GM12878 (cell line): ENCODE measurements at regions of chr20 and their contacts with region 1.

Region 1: DNA sequence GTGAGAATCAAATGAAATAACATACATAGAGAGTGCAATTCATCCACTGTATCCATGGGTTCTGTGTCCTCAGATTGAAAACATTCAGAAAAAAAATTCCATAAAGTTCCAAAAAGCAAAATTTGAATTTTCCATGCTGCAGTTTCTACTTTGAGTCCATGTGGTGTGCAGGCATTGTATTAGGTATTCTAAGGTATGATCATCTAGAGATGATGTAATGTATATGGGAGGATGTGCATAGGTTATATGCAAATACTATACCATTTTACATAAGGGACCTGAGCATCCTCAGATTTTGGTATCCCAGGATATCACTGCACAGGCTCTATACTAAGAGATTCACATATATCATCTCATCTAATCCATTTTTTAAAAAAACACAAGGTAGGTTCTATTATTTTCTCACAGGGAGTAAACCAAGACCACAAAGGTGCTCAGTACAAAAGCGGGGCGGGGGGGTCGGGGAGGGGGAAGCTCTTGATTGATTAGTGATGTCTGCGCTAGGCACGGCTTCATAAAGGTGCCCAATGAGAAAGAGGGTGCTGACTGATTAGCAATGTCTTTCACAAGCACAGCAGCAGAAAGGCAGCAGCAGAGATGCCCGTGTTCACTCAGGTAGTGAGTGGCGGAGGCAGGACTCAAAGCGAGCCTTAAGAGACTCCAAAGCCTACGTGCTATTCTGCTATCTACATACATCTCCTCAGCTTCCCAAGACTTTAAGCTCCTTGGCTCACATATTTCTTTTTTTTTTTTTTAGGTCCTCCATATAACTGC is 20.5 kb downstream of the NFATC2 start:
- DNase-seq: no peak
- ATAC-seq: no peak
- H3K4me3 ChIP-seq: no peak overlapping the region
- H3K27ac ChIP-seq: no peak overlapping the region
- H3K4me1 ChIP-seq: peaks cover 26% of the 10 kb centered on the region
- H3K27me3 ChIP-seq: no peaks in the 10 kb centered on the region
- CTCF ChIP-seq: no peak
- EP300 ChIP-seq: no peak
- POLR2A ChIP-seq: no peak
- RAD21 ChIP-seq: no peak

Region 2: DNA sequence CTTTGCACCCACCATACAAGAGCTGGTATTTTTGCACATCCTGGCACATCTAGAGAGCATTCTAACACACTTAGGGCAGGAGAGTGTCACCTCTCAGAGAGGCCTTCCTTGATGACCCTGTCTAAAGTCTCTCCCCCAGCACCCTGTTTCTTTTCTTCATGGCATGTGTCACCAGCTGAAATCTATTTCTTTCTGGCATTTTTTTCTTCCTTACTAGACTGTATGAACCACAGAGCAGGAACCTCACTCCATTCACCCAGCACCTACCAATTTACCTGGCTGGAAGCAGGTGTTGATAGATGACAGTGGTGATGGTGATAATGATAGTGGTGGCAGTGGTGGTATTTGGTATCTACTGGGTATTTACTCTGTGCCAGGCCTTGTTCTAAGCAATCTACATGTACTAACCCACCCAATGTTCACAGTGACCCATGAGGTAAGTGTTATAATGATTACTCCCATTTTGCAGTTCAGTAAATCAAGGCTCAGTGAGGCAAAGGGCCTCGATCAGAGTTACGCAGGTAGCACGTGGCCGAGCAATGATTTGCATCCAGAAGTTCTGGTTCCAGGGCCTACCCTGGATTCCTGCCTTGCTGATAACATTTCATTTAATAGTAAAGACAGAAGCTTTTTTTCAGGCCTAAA is 111.2 kb before region 1 on chr20:
- CTCF ChIA-PET with region 1: no interaction called
- POLR2A ChIA-PET with region 1: no interaction called
- RAD21 ChIA-PET with region 1: no interaction called
- SMC1A ChIA-PET with region 1: no interaction called
- in situ Hi-C with region 1: no loop called
- intact Hi-C with region 1: no loop called
- DNase-seq: no peak
- ATAC-seq: no peak
- H3K4me3 ChIP-seq: no peak overlapping the region
- H3K27ac ChIP-seq: no peak overlapping the region
- H3K4me1 ChIP-seq: peaks cover 31% of the 10 kb centered on the region
- H3K27me3 ChIP-seq: no peaks in the 10 kb centered on the region
- CTCF ChIP-seq: no peak
- EP300 ChIP-seq: no peak
- POLR2A ChIP-seq: no peak
- RAD21 ChIP-seq: no peak

Region 3: GRCh38 chr20:51428401-51429143 is 93.4 kb before region 1 on chr20:
- CTCF ChIA-PET with region 1: no interaction called
- POLR2A ChIA-PET with region 1: no interaction called
- RAD21 ChIA-PET with region 1: no interaction called
- SMC1A ChIA-PET with region 1: no interaction called
- in situ Hi-C with region 1: no loop called
- intact Hi-C with region 1: no loop called
- DNase-seq: no peak
- ATAC-seq: no peak
- H3K4me3 ChIP-seq: no peak overlapping the region
- H3K27ac ChIP-seq: no peak overlapping the region
- H3K4me1 ChIP-seq: peaks cover 23% of the 10 kb centered on the region
- H3K27me3 ChIP-seq: no peaks in the 10 kb centered on the region
- CTCF ChIP-seq: no peak
- EP300 ChIP-seq: no peak
- POLR2A ChIP-seq: no peak
- RAD21 ChIP-seq: no peak

Region 4: DNA sequence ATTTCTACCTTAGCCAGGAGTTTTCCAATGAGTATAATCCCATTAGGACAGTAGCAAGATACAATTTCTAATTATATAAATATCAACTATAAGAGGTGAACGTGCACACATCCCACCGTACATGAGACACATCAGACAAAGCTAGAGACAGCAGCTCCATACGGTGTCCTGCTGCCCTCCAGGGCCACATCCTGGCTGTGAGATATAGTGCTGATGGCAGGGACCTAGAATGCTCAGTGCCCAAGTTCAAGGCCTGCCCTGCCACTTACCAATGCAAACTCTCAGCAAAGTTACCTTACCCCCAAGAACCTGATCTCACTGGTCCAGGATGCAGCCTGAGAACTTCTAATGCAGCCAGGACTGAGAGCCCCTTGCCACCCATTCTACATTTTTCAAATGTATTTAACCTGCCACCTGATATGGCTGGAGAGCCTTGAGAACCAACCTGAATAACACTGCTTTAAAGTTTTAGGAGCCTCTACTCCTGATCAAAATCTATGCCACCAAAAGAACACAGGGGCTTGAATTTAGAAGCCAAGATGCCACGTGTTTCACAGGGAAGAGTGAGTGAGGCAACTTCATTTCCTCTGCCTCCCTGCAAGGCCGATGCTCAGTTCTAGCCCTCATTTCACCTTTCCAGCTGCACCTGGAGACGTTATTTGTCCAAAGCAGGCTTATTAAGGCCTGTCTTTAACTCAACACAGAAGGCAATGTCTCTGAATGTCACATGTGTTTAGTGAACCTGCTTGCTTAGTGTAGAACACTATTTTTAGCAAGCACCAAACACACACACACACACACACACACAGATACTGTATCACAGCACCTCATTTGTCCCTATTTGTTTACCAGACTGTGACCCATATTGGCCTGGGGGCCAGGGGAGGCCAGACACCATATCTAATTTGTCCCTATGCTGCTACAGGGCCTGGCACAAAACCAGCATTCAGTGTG is 14.4 kb after region 1 on chr20:
- CTCF ChIA-PET with region 1: no interaction called
- POLR2A ChIA-PET with region 1: interaction called, 6 read pairs
- RAD21 ChIA-PET with region 1: interaction called, 4 read pairs
- SMC1A ChIA-PET with region 1: interaction called, 4 read pairs
- in situ Hi-C with region 1: no loop called
- intact Hi-C with region 1: loop called (anchors 1 kb)
- DNase-seq: no peak
- ATAC-seq: no peak
- H3K4me3 ChIP-seq: no peak overlapping the region
- H3K27ac ChIP-seq: peak overlapping the region; percentile 15; the same call in 1 of the 2 replicates
- H3K4me1 ChIP-seq: peaks cover 60% of the 10 kb centered on the region
- H3K27me3 ChIP-seq: no peaks in the 10 kb centered on the region
- CTCF ChIP-seq: no peak
- EP300 ChIP-seq: no peak
- POLR2A ChIP-seq: no peak
- RAD21 ChIP-seq: no peak

Region 5: GRCh38 chr20:51712501-51713197 is 190.6 kb after region 1 on chr20:
- CTCF ChIA-PET with region 1: no interaction called
- POLR2A ChIA-PET with region 1: no interaction called
- RAD21 ChIA-PET with region 1: no interaction called
- SMC1A ChIA-PET with region 1: no interaction called
- in situ Hi-C with region 1: no loop called
- intact Hi-C with region 1: no loop called
- DNase-seq: no peak
- ATAC-seq: no peak
- H3K4me3 ChIP-seq: no peak overlapping the region
- H3K27ac ChIP-seq: no peak overlapping the region
- H3K4me1 ChIP-seq: no peaks in the 10 kb centered on the region
- H3K27me3 ChIP-seq: no peaks in the 10 kb centered on the region
- CTCF ChIP-seq: 0 out of 6 replicates have a peak, but pooled peaks of 2 of the 3 experiments have one; percentile 2
- EP300 ChIP-seq: no peak
- POLR2A ChIP-seq: no peak
- RAD21 ChIP-seq: no peak